A549 (cell line): ENCODE measurements at regions of chr11 and their contacts with region 1.

Region 1: GRCh38 chr11:10405855-10406592 is 49.0 kb upstream of the AMPD3 start:
- DNase-seq: peak; percentile 78 to 90
- ATAC-seq: peak; percentile 88 to 93
- H3K4me3 ChIP-seq: no peak overlapping the region
- H3K27ac ChIP-seq: peak overlapping the region; percentile 75 to 79
- H3K4me1 ChIP-seq: peaks cover 26% of the 10 kb centered on the region
- CTCF ChIP-seq: peak; percentile 87
- EP300 ChIP-seq: no peak
- POLR2A ChIP-seq: no peak
- RAD21 ChIP-seq: peak; percentile 92 to 94

Region 2: GRCh38 chr11:10247011-10247410 is 159.0 kb before region 1 on chr11:
- CTCF ChIA-PET with region 1: no interaction called
- POLR2A ChIA-PET with region 1: no interaction called
- DNase-seq: no peak
- ATAC-seq: no peak
- H3K4me3 ChIP-seq: no peak overlapping the region
- H3K27ac ChIP-seq: no peak overlapping the region
- H3K4me1 ChIP-seq: peaks cover 7% of the 10 kb centered on the region; the same call in 1 of the 3 replicates
- CTCF ChIP-seq: no peak
- EP300 ChIP-seq: no peak
- POLR2A ChIP-seq: no peak
- RAD21 ChIP-seq: no peak

Region 3: GRCh38 chr11:10394229-10395101 is 11.6 kb before region 1 on chr11:
- CTCF ChIA-PET with region 1: interaction called, 16 read pairs
- POLR2A ChIA-PET with region 1: no interaction called
- DNase-seq: peak; percentile 80 to 94
- ATAC-seq: peak; percentile 92 to 95
- H3K4me3 ChIP-seq: no peak overlapping the region
- H3K27ac ChIP-seq: peak overlapping the region; percentile 81 to 83
- H3K4me1 ChIP-seq: peaks cover 67% of the 10 kb centered on the region
- CTCF ChIP-seq: no peak
- EP300 ChIP-seq: peak; percentile 88 to 96; a peak in 4 of 5 replicates
- POLR2A ChIP-seq: no peak
- RAD21 ChIP-seq: peak in 1 of 2 experiments; percentile 46; a peak in 2 of 5 replicates

Region 4: GRCh38 chr11:10455637-10456487 is 49.8 kb after region 1 on chr11:
- CTCF ChIA-PET with region 1: interaction called, 20 read pairs
- POLR2A ChIA-PET with region 1: interaction called, 4 read pairs
- DNase-seq: peak; percentile 44 to 52
- ATAC-seq: peak; percentile 63 to 71
- H3K4me3 ChIP-seq: peak overlapping the region; percentile 36
- H3K27ac ChIP-seq: peak overlapping the region; percentile 74 to 84
- H3K4me1 ChIP-seq: peaks cover 25% of the 10 kb centered on the region
- CTCF ChIP-seq: no peak
- EP300 ChIP-seq: no peak
- POLR2A ChIP-seq: peak; percentile 32; the same call in 1 of the 2 replicates
- RAD21 ChIP-seq: no peak

Region 5: GRCh38 chr11:10653926-10654810 is 248.1 kb after region 1 on chr11:
- CTCF ChIA-PET with region 1: interaction called, 13 read pairs
- POLR2A ChIA-PET with region 1: interaction called, 3 read pairs
- DNase-seq: peak; percentile 35 to 72
- ATAC-seq: peak; percentile 44 to 80; a peak in 3 of 6 replicates
- H3K4me3 ChIP-seq: no peak overlapping the region
- H3K27ac ChIP-seq: peak overlapping the region; percentile 55 to 65; a peak in 4 of 6 replicates
- H3K4me1 ChIP-seq: peaks cover 44% of the 10 kb centered on the region
- CTCF ChIP-seq: peak; percentile 71
- EP300 ChIP-seq: no peak
- POLR2A ChIP-seq: no peak
- RAD21 ChIP-seq: peak; percentile 77 to 83

Region 6: GRCh38 chr11:10725114-10725906 is 319.3 kb after region 1 on chr11:
- CTCF ChIA-PET with region 1: interaction called, 38 read pairs
- POLR2A ChIA-PET with region 1: no interaction called
- DNase-seq: no peak
- ATAC-seq: no peak
- H3K4me3 ChIP-seq: no peak overlapping the region
- H3K27ac ChIP-seq: no peak overlapping the region
- H3K4me1 ChIP-seq: no peaks in the 10 kb centered on the region
- CTCF ChIP-seq: no peak
- EP300 ChIP-seq: no peak
- POLR2A ChIP-seq: no peak
- RAD21 ChIP-seq: no peak